ENCODE measurements at regions of chr3 and their contacts with region 1.

Region 1: DNA sequence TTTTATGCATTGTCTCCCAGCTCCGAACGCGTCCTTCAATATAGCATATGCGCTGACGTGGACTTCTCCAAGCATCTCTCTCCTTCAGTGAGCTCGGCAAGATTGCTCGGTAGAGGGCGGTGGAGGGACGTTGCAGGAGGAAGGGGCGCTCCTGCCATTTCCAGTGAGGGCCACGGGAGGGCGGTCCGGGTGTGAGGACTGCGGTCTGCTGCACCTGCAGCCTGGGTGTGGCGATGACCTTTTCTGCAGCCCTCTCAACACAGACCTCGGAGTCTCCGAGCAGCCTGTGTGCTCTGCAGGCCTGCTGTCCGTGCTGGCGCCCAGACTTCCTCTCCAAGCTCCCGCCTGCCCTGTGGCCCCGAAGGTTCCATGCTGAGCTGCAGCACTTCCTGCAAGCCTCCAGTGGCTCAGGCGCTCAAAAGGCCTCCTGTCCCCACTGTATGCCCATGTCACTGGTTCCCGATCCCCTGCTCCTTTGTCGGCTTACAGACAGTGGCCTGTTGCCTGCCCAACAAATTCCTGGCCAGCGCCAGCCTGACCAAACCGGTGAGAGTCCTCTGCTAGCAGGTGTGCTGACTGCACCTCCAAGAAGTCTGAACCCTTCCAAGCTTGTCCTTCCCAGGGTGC is 8.9 kb upstream of the RTP3 start:
- DNase-seq: peak; percentile 88 to 96 (median 93)
- ATAC-seq: peak; percentile 97
- H3K4me3 ChIP-seq: peak overlapping the region; percentile 19 to 39
- H3K4me3 Mint-ChIP-seq: peak overlapping the region; percentile 69
- H3K27ac ChIP-seq: no peak overlapping the region
- H3K27ac Mint-ChIP-seq: peak overlapping the region; percentile 81
- H3K4me1 ChIP-seq: peaks cover 8% of the 10 kb centered on the region
- H3K4me1 Mint-ChIP-seq: peaks cover 18% of the 10 kb centered on the region
- H3K27me3 ChIP-seq: no peaks in the 10 kb centered on the region
- H3K27me3 Mint-ChIP-seq: no peaks in the 10 kb centered on the region
- CTCF ChIP-seq: peak; percentile 100

Region 2: GRCh38 chr3:46433841-46434240 is 55.0 kb before region 1 on chr3:
- CTCF ChIA-PET with region 1: no interaction called
- POLR2A ChIA-PET with region 1: no interaction called
- intact Hi-C with region 1: no loop called
- DNase-seq: no peak
- ATAC-seq: no peak
- H3K4me3 ChIP-seq: no peak overlapping the region
- H3K4me3 Mint-ChIP-seq: no peak overlapping the region
- H3K27ac ChIP-seq: no peak overlapping the region
- H3K27ac Mint-ChIP-seq: no peak overlapping the region
- H3K4me1 ChIP-seq: no peaks in the 10 kb centered on the region
- H3K4me1 Mint-ChIP-seq: no peaks in the 10 kb centered on the region
- H3K27me3 ChIP-seq: no peaks in the 10 kb centered on the region
- H3K27me3 Mint-ChIP-seq: no peaks in the 10 kb centered on the region
- CTCF ChIP-seq: no peak

Region 3: DNA sequence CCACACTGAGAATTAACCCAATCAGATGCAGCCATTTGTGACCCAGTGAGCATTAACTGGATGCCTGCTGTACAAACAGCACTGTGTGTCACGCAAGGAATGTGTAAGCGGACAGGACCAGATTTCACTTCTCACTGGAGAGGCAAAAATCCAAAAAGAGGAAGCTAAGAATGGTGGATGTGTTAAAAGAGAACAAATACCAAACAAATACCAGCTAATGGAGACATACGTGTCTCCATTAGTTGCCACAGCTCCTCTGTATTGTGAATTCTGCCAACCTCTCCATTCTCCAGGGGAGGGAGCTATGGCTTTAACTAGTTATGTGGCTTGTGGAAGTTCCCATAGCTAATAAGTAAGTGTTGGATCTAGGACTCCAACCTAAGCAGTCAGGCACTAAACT is 26.7 kb before region 1 on chr3:
- CTCF ChIA-PET with region 1: interaction called, 17 read pairs
- POLR2A ChIA-PET with region 1: no interaction called
- intact Hi-C with region 1: no loop called
- DNase-seq: peak in 1 of 9 experiments; percentile 11
- ATAC-seq: no peak
- H3K4me3 ChIP-seq: no peak overlapping the region
- H3K4me3 Mint-ChIP-seq: no peak overlapping the region
- H3K27ac ChIP-seq: no peak overlapping the region
- H3K27ac Mint-ChIP-seq: no peak overlapping the region
- H3K4me1 ChIP-seq: no peaks in the 10 kb centered on the region
- H3K4me1 Mint-ChIP-seq: no peaks in the 10 kb centered on the region
- H3K27me3 ChIP-seq: peaks cover 0 to 5% of the 10 kb centered on the region in 2 experiments
- H3K27me3 Mint-ChIP-seq: peaks cover 39% of the 10 kb centered on the region
- CTCF ChIP-seq: no peak

Region 4: GRCh38 chr3:46538803-46539442 is 50.1 kb after region 1 on chr3:
- CTCF ChIA-PET with region 1: interaction called, 56 read pairs
- POLR2A ChIA-PET with region 1: interaction called, 21 read pairs
- intact Hi-C with region 1: loop called (anchors 1 kb)
- DNase-seq: peak; percentile 77 to 97 (median 89)
- ATAC-seq: peak; percentile 90
- H3K4me3 ChIP-seq: peak overlapping the region; percentile 30 to 33
- H3K4me3 Mint-ChIP-seq: peak overlapping the region; percentile 68
- H3K27ac ChIP-seq: peak overlapping the region; percentile 67 to 78
- H3K27ac Mint-ChIP-seq: peak overlapping the region; percentile 95
- H3K4me1 ChIP-seq: peaks cover 29% of the 10 kb centered on the region
- H3K4me1 Mint-ChIP-seq: peaks cover 54% of the 10 kb centered on the region
- H3K27me3 ChIP-seq: no peaks in the 10 kb centered on the region
- H3K27me3 Mint-ChIP-seq: no peaks in the 10 kb centered on the region
- CTCF ChIP-seq: no peak

Region 5: GRCh38 chr3:46566036-46566641 is 77.3 kb after region 1 on chr3 and contains the start of gene LRRC2:
- CTCF ChIA-PET with region 1: interaction called, 301 read pairs
- POLR2A ChIA-PET with region 1: interaction called, 6 read pairs
- intact Hi-C with region 1: no loop called
- DNase-seq: peak in 6 of 9 experiments; percentile 22 to 61 (median 40)
- ATAC-seq: peak; percentile 77
- H3K4me3 ChIP-seq: peak within 1 kb of the TSS; percentile 22 to 44
- H3K4me3 Mint-ChIP-seq: peak within 1 kb of the TSS; percentile 76
- H3K27ac ChIP-seq: no peak within 1 kb of the TSS
- H3K27ac Mint-ChIP-seq: peak within 1 kb of the TSS; percentile 27
- H3K4me1 ChIP-seq: peaks cover 9% of the 10 kb centered on the region
- H3K4me1 Mint-ChIP-seq: peaks cover 14% of the 10 kb centered on the region
- H3K27me3 ChIP-seq: peaks cover 8 to 12% of the 10 kb centered on the region in 2 experiments
- H3K27me3 Mint-ChIP-seq: peaks cover 26% of the 10 kb centered on the region
- CTCF ChIP-seq: no peak
- total RNA-seq, gene LRRC2: 0.33 to 0.75 TPM

Region 6: GRCh38 chr3:46604127-46604526 is 115.3 kb after region 1 on chr3:
- CTCF ChIA-PET with region 1: interaction called, 10 read pairs
- POLR2A ChIA-PET with region 1: no interaction called
- intact Hi-C with region 1: no loop called
- DNase-seq: no peak
- ATAC-seq: no peak
- H3K4me3 ChIP-seq: no peak overlapping the region
- H3K4me3 Mint-ChIP-seq: no peak overlapping the region
- H3K27ac ChIP-seq: no peak overlapping the region
- H3K27ac Mint-ChIP-seq: no peak overlapping the region
- H3K4me1 ChIP-seq: no peaks in the 10 kb centered on the region
- H3K4me1 Mint-ChIP-seq: no peaks in the 10 kb centered on the region
- H3K27me3 ChIP-seq: no peaks in the 10 kb centered on the region
- H3K27me3 Mint-ChIP-seq: no peaks in the 10 kb centered on the region
- CTCF ChIP-seq: no peak

Region 7: DNA sequence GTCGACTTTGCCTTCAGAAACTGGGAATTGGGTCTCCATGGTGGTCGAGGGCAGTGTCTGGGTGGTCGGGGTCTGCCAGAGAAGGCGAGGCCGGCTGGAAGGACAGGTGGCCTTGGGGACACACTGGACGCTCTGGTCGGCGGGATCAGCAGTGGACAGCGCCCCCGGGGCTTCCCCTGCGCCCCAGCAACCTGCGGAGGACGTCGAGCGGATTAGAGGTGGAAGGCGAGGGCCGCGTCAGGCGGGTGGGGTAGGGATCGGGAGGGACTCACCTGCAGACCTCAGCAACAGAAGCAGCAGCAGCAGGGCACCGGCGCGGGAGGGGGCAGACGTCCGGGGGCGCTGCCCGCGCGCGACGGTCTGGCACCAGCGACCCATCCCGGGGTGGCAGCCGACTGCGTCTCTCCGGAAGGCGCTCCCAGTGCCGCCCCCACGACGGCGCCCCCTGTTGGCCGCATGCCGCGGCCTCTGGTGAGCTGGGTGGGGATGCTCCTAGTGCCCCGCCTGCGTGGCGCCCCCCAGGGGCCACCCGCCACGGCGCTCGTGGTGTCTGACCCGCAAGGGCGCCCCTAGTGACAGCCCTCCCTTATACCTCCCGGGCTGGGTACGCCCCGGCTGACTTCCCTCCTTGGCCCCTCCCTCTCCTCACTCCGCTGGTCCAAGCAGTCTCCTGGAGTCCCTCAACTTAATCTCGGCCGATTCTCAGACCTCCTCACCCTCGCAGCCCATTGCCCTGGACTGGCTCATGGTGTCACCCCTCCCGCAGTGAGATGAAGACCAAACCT is 228.8 kb after region 1 on chr3 and contains the start of gene PRSS50:
- CTCF ChIA-PET with region 1: no interaction called
- POLR2A ChIA-PET with region 1: no interaction called
- intact Hi-C with region 1: no loop called
- DNase-seq: peak in 3 of 9 experiments; percentile 25 to 27 (median 27)
- ATAC-seq: peak; percentile 51
- H3K4me3 ChIP-seq: no peak within 1 kb of the TSS
- H3K4me3 Mint-ChIP-seq: no peak within 1 kb of the TSS
- H3K27ac ChIP-seq: no peak within 1 kb of the TSS
- H3K27ac Mint-ChIP-seq: no peak within 1 kb of the TSS
- H3K4me1 ChIP-seq: no peaks in the 10 kb centered on the region
- H3K4me1 Mint-ChIP-seq: no peaks in the 10 kb centered on the region
- H3K27me3 ChIP-seq: peaks cover 0 to 2% of the 10 kb centered on the region in 2 experiments
- H3K27me3 Mint-ChIP-seq: peaks cover 14% of the 10 kb centered on the region
- CTCF ChIP-seq: no peak
- total RNA-seq, gene PRSS50: not detected

Region 8: DNA sequence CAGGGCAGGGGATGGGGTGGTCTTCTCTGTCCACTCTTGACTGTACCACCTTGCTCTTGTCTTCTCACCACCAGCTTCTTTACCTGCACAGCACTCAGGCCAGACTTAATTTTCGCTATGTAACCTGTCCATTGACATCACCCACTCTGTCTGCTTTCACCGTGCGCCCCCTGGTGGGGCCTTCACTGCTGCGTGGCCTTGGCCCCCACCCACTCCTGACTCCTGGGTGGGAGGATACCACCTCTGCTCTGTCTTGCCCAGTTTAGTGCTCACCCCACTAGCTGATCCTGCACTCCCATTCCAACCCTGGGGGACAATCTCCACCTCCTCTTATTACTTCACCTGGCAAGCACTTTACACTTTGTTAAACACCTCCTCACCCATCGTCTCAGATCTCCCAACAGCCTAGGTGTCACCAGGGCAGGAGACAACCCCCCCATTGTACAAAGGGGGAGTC is 406.4 kb after region 1 on chr3:
- CTCF ChIA-PET with region 1: no interaction called
- POLR2A ChIA-PET with region 1: no interaction called
- intact Hi-C with region 1: loop called in 1 of 2 experiments (anchors 5 kb)
- DNase-seq: peak; percentile 61 to 87 (median 79)
- ATAC-seq: peak; percentile 91
- H3K4me3 ChIP-seq: no peak overlapping the region
- H3K4me3 Mint-ChIP-seq: no peak overlapping the region
- H3K27ac ChIP-seq: no peak overlapping the region
- H3K27ac Mint-ChIP-seq: no peak overlapping the region
- H3K4me1 ChIP-seq: no peaks in the 10 kb centered on the region
- H3K4me1 Mint-ChIP-seq: peaks cover 12% of the 10 kb centered on the region
- H3K27me3 ChIP-seq: peaks cover 4 to 18% of the 10 kb centered on the region in 2 experiments
- H3K27me3 Mint-ChIP-seq: peaks cover 54% of the 10 kb centered on the region
- CTCF ChIP-seq: peak; percentile 71

Region 9: GRCh38 chr3:47227678-47228077 is 738.8 kb after region 1 on chr3:
- CTCF ChIA-PET with region 1: no interaction called
- POLR2A ChIA-PET with region 1: no interaction called
- intact Hi-C with region 1: no loop called
- DNase-seq: no peak
- ATAC-seq: no peak
- H3K4me3 ChIP-seq: no peak overlapping the region
- H3K4me3 Mint-ChIP-seq: no peak overlapping the region
- H3K27ac ChIP-seq: no peak overlapping the region
- H3K27ac Mint-ChIP-seq: peak overlapping the region; percentile 37
- H3K4me1 ChIP-seq: no peaks in the 10 kb centered on the region
- H3K4me1 Mint-ChIP-seq: no peaks in the 10 kb centered on the region
- H3K27me3 ChIP-seq: no peaks in the 10 kb centered on the region
- H3K27me3 Mint-ChIP-seq: no peaks in the 10 kb centered on the region
- CTCF ChIP-seq: no peak

Measured in CD8-positive, alpha-beta T cell (primary cell).